Activated T-helper 1 cell treated with anti-CD3 and anti-CD28 coated beads, Interleukin-12 subunit alpha, Interleukin-12 subunit beta, Interleukin-2, Interleukin-4 antibody, amounts not matched to agents 30 ng/mL and 10 ng/mL and 1 ng/mL, durations not matched to agents 14 hours and 24 hours and 36 hours (primary cell): ENCODE measurements at regions of chr3 and their contacts with region 1.

Region 1: DNA sequence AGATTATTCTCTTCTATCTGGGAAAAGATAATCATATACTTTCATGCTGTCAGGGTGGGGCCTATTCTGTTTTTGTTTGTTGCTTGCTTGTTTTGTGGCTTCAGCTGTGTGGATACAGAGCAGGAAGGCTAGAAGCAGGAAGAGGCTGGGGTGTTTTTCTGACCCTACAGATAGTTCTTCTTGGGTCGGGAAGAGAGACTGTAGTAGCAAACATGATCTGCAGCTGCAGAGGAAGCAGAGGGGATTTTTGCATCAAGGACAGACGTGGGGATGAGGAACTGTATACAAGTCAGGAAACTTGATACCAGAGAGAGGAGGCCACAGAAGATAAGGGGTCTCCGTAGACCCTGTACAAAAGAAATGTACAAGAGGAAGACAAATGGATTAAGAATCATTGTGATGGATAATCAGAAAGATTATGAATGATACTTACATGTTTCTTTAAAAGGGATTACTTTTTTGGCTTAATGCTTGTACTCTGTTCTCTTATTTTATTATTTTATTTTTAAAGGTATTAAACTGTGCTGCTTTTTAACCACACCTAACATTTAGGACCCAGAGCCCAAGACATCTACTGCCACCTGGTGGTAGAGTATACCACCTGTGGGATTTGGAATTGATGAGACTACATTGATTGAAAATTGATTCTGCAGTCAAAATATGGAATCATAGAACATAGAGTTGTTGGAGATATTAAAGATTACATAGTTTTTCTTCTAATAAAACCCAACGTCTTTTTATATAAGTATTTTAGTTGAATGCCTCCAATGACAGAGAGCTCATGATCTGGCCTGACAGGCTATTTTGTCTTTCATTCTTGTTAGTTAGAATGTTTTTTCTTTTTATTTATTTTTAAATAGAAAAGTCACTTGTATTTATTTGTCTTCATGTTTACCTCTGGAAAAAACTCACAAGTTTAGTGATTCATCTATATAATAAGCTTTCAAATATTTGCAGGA is 87.3 kb upstream of the ROPN1 start:
- DNase-seq: no peak
- H3K4me3 Mint-ChIP-seq: no peak overlapping the region
- H3K27ac Mint-ChIP-seq: no peak overlapping the region
- H3K4me1 Mint-ChIP-seq: no peaks in the 10 kb centered on the region
- H3K27me3 Mint-ChIP-seq: peaks cover 3% of the 10 kb centered on the region

Region 2: DNA sequence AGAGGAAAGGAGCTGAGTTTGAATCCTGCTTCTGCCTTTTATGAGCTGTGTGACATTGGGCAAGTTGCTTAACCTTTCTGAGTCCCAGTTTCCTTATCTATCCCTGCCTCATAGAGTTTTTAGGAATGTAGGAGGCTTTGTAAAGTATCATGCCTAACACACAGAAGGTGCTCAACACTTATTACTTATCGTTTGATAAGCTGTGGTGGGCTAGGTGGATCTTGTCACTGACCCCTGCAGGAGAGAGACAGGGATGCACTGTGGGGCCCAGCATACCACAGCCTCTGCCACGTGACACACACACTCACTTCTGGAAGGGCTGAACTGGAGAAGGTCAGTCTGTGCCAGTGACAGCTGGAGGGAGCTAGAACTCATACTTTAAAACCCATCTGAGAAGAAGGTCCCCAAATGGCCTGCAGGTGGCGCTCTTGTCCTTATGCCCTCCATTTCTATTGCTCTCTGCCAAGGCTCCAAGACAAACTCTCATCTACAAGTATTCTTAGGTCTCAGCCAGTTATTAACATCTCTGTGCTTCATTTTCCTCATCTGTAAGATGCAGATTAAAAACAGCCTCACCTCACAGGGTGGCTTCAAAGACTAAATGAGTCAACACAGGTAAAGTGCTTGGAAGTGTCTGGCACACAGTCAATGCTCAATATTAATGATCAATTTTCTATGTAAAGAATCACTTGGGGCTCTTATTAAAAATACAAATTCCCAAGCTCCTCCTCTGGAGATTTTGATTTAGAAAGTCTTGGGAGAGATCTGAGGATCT is 436.9 kb before region 1 on chr3:
- intact Hi-C with region 1: loop called (anchors 5 kb)
- DNase-seq: peak; percentile 27
- H3K4me3 Mint-ChIP-seq: no peak overlapping the region
- H3K27ac Mint-ChIP-seq: no peak overlapping the region
- H3K4me1 Mint-ChIP-seq: no peaks in the 10 kb centered on the region
- H3K27me3 Mint-ChIP-seq: peaks cover 2% of the 10 kb centered on the region

Region 3: DNA sequence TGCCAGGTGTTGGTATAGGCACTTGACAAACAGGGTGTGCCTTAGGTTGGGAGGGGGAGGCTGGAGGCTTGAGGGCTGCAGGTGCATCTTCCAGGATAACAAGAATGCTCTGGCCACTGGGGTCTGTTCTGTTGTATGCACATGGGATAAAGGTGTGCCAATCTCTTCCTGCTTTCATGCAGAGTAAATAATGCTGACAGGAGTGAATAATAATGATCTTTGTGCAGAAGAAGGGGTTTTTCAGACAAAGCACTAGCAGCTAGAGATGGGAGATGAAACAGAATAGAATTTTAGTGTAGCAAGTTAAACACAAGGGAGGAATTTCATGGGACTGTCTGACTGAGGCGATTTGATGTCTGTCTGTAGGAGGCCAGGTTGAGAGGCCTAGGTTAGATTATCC is 85.4 kb before region 1 on chr3:
- intact Hi-C with region 1: no loop called
- DNase-seq: no peak
- H3K4me3 Mint-ChIP-seq: no peak overlapping the region
- H3K27ac Mint-ChIP-seq: no peak overlapping the region
- H3K4me1 Mint-ChIP-seq: no peaks in the 10 kb centered on the region
- H3K27me3 Mint-ChIP-seq: peaks cover 23% of the 10 kb centered on the region

Region 4: DNA sequence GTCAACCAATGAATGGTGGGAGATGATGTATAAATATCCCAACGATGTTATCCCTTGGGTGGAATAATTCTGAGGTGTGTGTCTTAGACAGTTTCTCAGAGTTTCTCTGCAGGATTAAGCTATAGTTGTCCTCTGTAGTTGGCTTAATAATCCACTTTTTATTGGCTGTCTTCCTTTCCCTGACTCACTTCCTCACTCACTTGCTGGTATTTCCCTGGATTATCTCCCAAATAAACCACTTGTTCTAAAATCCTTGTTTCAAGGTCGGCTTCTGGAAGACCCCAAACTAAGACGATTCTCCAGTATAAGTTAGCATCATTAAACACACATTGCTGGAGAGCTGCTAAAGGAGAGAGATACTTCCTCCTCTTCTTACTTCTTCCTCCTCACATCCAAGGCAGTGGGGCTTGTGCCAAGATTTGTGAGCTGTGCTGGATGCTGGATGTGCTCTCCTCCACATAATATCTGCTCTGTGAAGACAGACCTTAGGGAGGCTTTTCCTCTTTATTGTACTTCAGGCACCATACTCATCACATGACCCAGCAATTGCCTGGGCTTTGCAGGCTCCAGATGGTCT is 64.8 kb before region 1 on chr3:
- intact Hi-C with region 1: loop called (anchors 1 kb)
- DNase-seq: no peak
- H3K4me3 Mint-ChIP-seq: no peak overlapping the region
- H3K27ac Mint-ChIP-seq: no peak overlapping the region
- H3K4me1 Mint-ChIP-seq: no peaks in the 10 kb centered on the region
- H3K27me3 Mint-ChIP-seq: peaks cover 36% of the 10 kb centered on the region

Region 5: GRCh38 chr3:124032648-124033359 is 46.4 kb before region 1 on chr3:
- intact Hi-C with region 1: loop called (anchors 5 kb)
- DNase-seq: peak; percentile 53
- H3K4me3 Mint-ChIP-seq: peak overlapping the region; percentile 81
- H3K27ac Mint-ChIP-seq: no peak overlapping the region
- H3K4me1 Mint-ChIP-seq: peaks cover 12% of the 10 kb centered on the region
- H3K27me3 Mint-ChIP-seq: peaks cover 52% of the 10 kb centered on the region